HCT116 (cell line): ENCODE measurements at regions of chr6 and their contacts with region 1.

Region 1: GRCh38 chr6:27157459-27158315 is 89.8 kb upstream of the PRSS16 start:
- DNase-seq: peak; percentile 65
- ATAC-seq: peak; percentile 87
- H3K4me3 ChIP-seq: peak overlapping the region; percentile 39 to 52
- H3K27ac ChIP-seq: peak overlapping the region; percentile 57
- H3K4me1 ChIP-seq: peaks cover 4 to 41% of the 10 kb centered on the region in 2 experiments; a peak in 3 of 4 replicates
- H3K27me3 ChIP-seq: no peaks in the 10 kb centered on the region
- CTCF ChIP-seq: peak; percentile 44 to 59 (median 56); a peak in 5 of 6 replicates
- POLR2A ChIP-seq: no peak
- RAD21 ChIP-seq: peak; percentile 49

Region 2: DNA sequence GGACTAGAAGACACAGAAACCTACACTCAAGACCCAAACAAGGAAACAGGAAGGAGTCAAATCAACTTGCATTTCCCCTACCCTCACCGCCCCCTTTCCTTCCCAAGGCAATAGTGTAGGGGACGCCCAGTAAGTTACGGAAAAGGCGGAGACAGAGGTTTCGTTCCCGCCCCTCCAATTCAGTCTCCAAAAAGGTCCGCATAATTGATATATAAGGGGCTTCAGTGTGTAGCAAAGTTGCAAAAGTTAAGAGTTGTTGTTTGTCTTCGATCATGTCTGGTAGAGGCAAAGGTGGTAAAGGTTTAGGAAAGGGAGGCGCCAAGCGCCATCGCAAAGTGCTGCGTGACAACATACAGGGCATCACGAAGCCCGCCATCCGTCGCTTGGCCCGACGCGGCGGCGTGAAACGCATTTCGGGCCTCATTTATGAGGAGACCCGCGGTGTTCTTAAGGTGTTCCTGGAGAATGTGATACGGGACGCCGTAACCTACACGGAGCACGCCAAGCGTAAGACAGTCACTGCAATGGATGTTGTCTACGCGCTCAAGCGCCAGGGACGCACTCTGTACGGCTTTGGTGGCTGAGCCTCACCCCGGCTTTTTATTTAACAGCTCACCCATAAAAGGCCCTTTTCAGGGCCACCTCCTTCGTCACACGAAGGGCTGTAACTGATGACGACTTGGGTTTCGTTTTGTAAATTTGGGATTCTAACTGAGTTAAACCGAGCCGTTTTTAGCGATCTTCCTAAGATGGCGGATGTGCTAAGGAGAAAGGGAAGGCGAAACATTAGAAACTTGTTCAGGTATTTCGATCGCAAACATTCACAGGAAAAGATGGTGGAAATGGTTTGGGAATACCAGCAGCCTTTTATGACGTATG is 917.3 kb before region 1 on chr6:
- CTCF ChIA-PET with region 1: no interaction called
- POLR2A ChIA-PET with region 1: no interaction called
- RAD21 ChIA-PET with region 1: no interaction called
- intact Hi-C with region 1: no loop called
- DNase-seq: no peak
- ATAC-seq: no peak
- H3K4me3 ChIP-seq: no peak overlapping the region
- H3K27ac ChIP-seq: no peak overlapping the region
- H3K4me1 ChIP-seq: peaks cover 0 to 9% of the 10 kb centered on the region in 2 experiments; a peak in 2 of 4 replicates
- H3K27me3 ChIP-seq: no peaks in the 10 kb centered on the region
- CTCF ChIP-seq: no peak
- POLR2A ChIP-seq: no peak
- RAD21 ChIP-seq: no peak

Region 3: DNA sequence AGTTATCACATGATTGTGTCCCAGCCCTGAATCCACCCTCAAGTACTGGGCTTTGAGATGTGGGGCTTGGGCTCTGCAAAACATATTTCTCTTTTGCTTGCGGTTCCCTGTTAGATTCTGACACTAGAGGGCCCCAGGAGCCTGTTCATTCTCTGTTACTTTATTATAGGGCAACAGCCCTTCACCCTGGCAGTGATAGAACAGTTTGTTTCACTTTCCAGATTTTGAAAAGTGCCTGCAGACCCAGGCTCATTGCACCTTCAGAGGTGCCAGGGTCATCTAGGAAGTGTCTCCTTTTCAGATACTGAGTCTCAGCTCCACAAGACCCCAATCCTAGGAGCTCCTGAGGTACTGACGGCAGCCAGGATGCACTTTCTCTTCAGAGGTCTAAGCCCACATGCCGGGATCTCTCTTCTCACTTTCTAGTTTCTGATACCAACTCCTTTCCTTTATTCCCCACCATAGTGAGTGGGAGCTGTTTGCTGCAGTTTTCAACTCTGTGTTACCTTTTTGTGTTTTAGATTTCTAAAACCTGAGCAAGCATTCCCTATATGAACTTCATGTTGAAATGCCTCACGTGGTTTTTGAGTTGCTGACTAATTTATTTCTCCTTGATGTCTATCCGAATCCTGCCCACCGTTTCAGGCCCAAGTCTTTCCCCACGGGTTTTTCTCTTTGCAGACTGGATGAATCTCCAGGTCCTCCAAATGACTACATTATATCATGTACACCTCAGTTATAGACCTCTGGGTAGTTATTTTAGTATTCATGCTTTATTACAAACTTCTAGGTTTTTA is 550.1 kb before region 1 on chr6:
- CTCF ChIA-PET with region 1: no interaction called
- POLR2A ChIA-PET with region 1: no interaction called
- RAD21 ChIA-PET with region 1: no interaction called
- intact Hi-C with region 1: loop called (anchors 5 kb)
- DNase-seq: peak; percentile 48
- ATAC-seq: peak; percentile 97
- H3K4me3 ChIP-seq: peak overlapping the region in 1 of 2 experiments; percentile 15; a peak in 1 of 4 replicates
- H3K27ac ChIP-seq: no peak overlapping the region
- H3K4me1 ChIP-seq: no peaks in the 10 kb centered on the region; a peak in 1 of 4 replicates
- H3K27me3 ChIP-seq: no peaks in the 10 kb centered on the region
- CTCF ChIP-seq: peak; percentile 79 to 80 (median 80)
- POLR2A ChIP-seq: no peak
- RAD21 ChIP-seq: peak; percentile 95

Region 4: DNA sequence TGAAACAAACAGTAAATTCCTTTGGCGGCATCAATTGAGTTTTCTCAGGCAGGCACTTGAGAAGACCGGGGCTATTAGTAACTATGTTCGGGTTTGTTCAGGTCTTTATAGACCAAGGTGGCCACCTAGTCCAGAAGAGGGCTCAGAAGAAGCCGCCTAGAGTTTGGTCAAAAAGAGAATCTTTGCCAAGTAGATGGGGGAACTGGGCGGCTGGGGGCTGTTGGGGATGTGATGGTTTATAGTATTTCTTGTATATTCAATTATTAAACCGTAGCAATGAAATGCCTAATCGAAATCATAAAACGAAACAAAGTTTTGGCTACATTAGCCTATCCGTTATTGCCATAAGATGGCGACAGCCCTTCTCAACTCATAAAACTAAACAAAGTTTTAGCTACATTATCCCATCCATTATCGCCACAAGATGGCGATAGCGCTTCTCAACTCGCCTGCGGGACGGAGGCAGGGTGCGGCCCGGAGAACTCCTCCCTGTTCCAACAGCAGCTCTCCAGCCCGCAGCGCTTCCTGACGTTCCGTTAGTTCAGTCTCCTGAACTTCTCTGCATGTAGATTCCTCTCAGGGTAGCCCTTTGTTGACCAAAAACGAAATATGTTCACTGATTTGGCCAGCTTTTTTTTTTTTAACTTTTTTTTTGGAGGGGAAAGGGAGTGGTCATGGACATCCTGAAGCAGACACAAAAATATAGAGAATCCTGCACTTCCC is 30.7 kb before region 1 on chr6:
- CTCF ChIA-PET with region 1: interaction called, 6 read pairs
- POLR2A ChIA-PET with region 1: no interaction called
- RAD21 ChIA-PET with region 1: no interaction called
- intact Hi-C with region 1: loop called (anchors 1 kb)
- DNase-seq: peak; percentile 85
- ATAC-seq: peak; percentile 84
- H3K4me3 ChIP-seq: peak overlapping the region; percentile 18 to 41
- H3K27ac ChIP-seq: peak overlapping the region; percentile 28; the same call in 1 of the 2 replicates
- H3K4me1 ChIP-seq: peaks cover 14 to 25% of the 10 kb centered on the region in 2 experiments
- H3K27me3 ChIP-seq: no peaks in the 10 kb centered on the region
- CTCF ChIP-seq: peak; percentile 73 to 98 (median 83)
- POLR2A ChIP-seq: no peak
- RAD21 ChIP-seq: peak; percentile 91

Region 5: DNA sequence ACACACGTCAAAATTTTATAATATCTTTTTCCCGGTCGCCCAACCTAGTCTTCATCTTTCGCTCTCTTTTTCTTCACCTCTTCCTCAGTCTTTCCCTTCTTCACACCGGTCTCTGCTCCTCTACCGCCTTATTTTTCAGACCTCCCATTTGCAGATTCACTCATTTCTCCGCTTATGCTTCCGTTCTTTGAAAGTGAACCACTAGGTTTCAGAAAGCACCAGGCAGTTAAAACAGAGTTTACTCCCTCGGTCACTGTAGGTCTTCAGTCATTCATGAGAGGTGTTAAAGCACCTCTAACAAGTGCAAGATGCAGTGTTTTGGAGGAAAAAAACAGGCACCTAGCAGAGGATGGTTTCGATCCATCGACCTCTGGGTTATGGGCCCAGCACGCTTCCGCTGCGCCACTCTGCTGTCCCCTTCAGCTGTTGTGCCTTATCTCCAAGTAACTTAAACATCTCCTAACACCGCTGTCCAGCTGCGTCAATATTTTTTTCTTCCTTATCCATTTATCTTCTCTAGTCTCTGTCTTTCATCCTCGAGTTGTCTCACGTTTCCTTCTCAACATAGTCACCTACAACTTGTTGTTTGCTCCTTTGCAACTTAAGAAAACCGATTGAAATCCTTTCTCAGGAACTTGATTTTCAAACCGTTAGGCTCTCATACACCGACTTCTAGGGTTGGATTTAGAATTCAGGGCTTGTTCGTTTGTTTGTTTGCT is 435.0 kb after region 1 on chr6:
- CTCF ChIA-PET with region 1: no interaction called
- POLR2A ChIA-PET with region 1: no interaction called
- RAD21 ChIA-PET with region 1: no interaction called
- intact Hi-C with region 1: loop called (anchors 5 kb)
- DNase-seq: no peak
- ATAC-seq: peak; percentile 88
- H3K4me3 ChIP-seq: no peak overlapping the region
- H3K27ac ChIP-seq: no peak overlapping the region
- H3K4me1 ChIP-seq: peaks cover 7 to 30% of the 10 kb centered on the region in 2 experiments
- H3K27me3 ChIP-seq: no peaks in the 10 kb centered on the region
- CTCF ChIP-seq: no peak
- POLR2A ChIP-seq: no peak
- RAD21 ChIP-seq: peak; percentile 8; the same call in 1 of the 2 replicates

Region 6: DNA sequence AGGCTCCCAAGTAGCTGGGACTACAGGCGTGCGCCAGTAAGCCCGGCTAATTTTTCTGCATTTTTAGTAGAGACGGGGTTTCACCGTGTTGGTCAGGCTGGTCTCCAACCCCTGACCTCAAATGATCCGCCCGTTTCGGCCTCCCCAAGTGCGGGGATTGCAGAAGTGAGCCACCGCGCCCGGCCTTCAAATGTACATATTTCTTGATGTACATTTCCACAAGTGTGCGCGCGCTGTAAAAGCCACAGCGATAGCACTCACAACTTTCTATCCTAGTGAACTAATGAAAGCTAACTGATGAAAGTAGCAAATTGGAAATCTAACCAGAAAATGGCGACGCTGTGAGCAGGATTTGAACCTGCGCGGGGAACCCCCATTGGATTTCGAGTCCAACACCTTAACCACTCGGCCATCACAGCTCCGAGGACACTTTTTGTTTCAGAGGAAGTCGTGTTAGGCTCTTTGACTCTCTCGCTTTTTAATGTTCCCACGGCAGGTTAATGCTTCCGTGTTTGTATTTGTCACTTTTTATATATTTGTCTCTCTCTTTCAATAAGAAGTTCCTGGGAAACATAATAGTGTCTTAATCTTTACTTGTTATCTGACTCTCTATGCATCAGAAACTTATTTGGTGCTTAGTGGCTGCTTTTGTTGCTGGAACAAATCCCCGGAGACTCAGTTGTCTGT is 514.6 kb after region 1 on chr6:
- CTCF ChIA-PET with region 1: no interaction called
- POLR2A ChIA-PET with region 1: no interaction called
- RAD21 ChIA-PET with region 1: no interaction called
- intact Hi-C with region 1: loop called (anchors 5 kb)
- DNase-seq: peak; percentile 90
- ATAC-seq: peak; percentile 76
- H3K4me3 ChIP-seq: peak overlapping the region; percentile 17 to 51
- H3K27ac ChIP-seq: peak overlapping the region; percentile 67
- H3K4me1 ChIP-seq: peaks cover 17 to 42% of the 10 kb centered on the region in 2 experiments; a peak in 3 of 4 replicates
- H3K27me3 ChIP-seq: no peaks in the 10 kb centered on the region
- CTCF ChIP-seq: no peak
- POLR2A ChIP-seq: no peak
- RAD21 ChIP-seq: no peak; the same call in 1 of the 2 replicates

Region 7: DNA sequence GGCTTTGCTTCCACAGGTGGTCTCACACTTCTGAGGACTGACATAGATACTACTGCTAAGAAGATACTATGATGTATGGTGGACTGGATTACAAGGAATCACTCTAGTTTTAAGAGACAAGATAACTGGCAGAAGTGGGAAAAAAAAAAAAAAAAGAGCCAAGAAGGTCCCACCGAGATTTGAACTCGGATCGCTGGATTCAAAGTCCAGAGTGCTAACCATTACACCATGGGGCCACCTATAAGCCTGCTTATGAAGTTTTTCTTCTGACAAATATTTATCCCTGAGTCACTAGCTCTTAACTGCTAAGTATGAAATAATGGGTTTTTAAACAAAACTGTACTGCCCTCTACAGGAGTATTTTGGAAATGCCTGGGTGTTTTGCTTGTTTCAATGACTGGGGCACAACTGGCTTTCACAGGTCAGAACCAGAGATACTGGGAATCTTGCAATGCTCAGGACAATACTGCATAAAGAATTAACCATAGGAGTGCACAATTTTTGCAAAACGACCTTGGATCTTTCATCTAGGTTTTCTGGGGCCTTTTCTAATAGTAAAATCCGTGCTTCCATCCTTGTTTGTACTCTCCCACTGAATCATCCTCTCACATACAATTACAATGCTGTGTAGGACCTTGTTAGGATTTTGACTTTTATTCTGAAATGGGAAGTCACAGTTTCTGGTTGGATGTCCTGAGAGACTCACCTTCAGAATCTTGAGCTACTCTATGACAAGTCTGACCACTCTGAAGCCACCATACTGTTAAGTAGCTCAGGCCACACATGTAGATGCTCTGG is 638.2 kb after region 1 on chr6:
- CTCF ChIA-PET with region 1: no interaction called
- POLR2A ChIA-PET with region 1: no interaction called
- RAD21 ChIA-PET with region 1: no interaction called
- intact Hi-C with region 1: no loop called
- DNase-seq: peak; percentile 90
- ATAC-seq: peak; percentile 46
- H3K4me3 ChIP-seq: no peak overlapping the region
- H3K27ac ChIP-seq: peak overlapping the region; percentile 26; the same call in 1 of the 2 replicates
- H3K4me1 ChIP-seq: peaks cover 13 to 32% of the 10 kb centered on the region in 2 experiments
- H3K27me3 ChIP-seq: no peaks in the 10 kb centered on the region
- CTCF ChIP-seq: peak; percentile 75 to 80 (median 76); a peak in 5 of 6 replicates
- POLR2A ChIP-seq: no peak
- RAD21 ChIP-seq: peak; percentile 82

Region 8: GRCh38 chr6:28597217-28598005 is 1439.7 kb after region 1 on chr6:
- CTCF ChIA-PET with region 1: no interaction called
- POLR2A ChIA-PET with region 1: no interaction called
- RAD21 ChIA-PET with region 1: no interaction called
- intact Hi-C with region 1: loop called (anchors 5 kb)
- DNase-seq: peak; percentile 83
- ATAC-seq: peak; percentile 86
- H3K4me3 ChIP-seq: peak overlapping the region; percentile 38 to 57
- H3K27ac ChIP-seq: peak overlapping the region; percentile 72
- H3K4me1 ChIP-seq: peaks cover 9 to 31% of the 10 kb centered on the region in 2 experiments; a peak in 3 of 4 replicates
- H3K27me3 ChIP-seq: no peaks in the 10 kb centered on the region
- CTCF ChIP-seq: no peak
- POLR2A ChIP-seq: no peak
- RAD21 ChIP-seq: 0 out of 2 replicates have a peak, but pooled peaks have one; percentile 7